GM12878 (cell line): ENCODE measurements at regions of chr13 and their contacts with region 1.

Region 1: GRCh38 chr13:64778002-64778401 is 2452.1 kb downstream of the PCDH9 start:
- DNase-seq: no peak
- ATAC-seq: no peak
- H3K4me3 ChIP-seq: no peak overlapping the region
- H3K27ac ChIP-seq: no peak overlapping the region
- H3K4me1 ChIP-seq: no peaks in the 10 kb centered on the region
- H3K27me3 ChIP-seq: no peaks in the 10 kb centered on the region
- CTCF ChIP-seq: no peak
- EP300 ChIP-seq: no peak
- POLR2A ChIP-seq: no peak
- RAD21 ChIP-seq: no peak

Region 2: DNA sequence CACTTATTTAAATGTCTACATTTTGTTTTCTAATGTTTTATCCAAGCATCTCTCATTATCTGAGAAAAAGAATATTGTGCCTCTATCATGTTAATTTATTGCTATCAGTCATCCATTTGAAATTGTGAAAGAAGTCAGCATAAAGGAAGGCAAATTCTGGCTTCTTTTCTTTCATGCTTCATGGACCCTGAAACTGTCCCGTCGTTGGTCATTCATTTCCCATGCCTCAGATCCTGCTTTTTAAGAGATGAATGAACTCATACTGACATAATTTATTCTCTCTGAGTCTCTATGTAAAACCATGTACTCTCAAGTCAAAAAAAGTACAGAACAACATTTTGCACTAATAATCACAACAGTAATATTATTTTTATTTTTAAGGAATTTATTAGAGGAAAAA is 59.9 kb before region 1 on chr13:
- CTCF ChIA-PET with region 1: no interaction called
- POLR2A ChIA-PET with region 1: no interaction called
- RAD21 ChIA-PET with region 1: no interaction called
- SMC1A ChIA-PET with region 1: no interaction called
- in situ Hi-C with region 1: loop called (anchors 10 kb)
- intact Hi-C with region 1: no loop called
- DNase-seq: no peak
- ATAC-seq: no peak
- H3K4me3 ChIP-seq: no peak overlapping the region
- H3K27ac ChIP-seq: no peak overlapping the region
- H3K4me1 ChIP-seq: no peaks in the 10 kb centered on the region
- H3K27me3 ChIP-seq: no peaks in the 10 kb centered on the region
- CTCF ChIP-seq: no peak
- EP300 ChIP-seq: no peak
- POLR2A ChIP-seq: no peak
- RAD21 ChIP-seq: no peak

Region 3: GRCh38 chr13:64791373-64791772 is 13.4 kb after region 1 on chr13:
- CTCF ChIA-PET with region 1: no interaction called
- POLR2A ChIA-PET with region 1: no interaction called
- RAD21 ChIA-PET with region 1: no interaction called
- SMC1A ChIA-PET with region 1: no interaction called
- in situ Hi-C with region 1: no loop called
- intact Hi-C with region 1: no loop called
- DNase-seq: no peak
- ATAC-seq: peak; percentile 58
- H3K4me3 ChIP-seq: no peak overlapping the region
- H3K27ac ChIP-seq: no peak overlapping the region
- H3K4me1 ChIP-seq: no peaks in the 10 kb centered on the region
- H3K27me3 ChIP-seq: no peaks in the 10 kb centered on the region
- CTCF ChIP-seq: no peak
- EP300 ChIP-seq: no peak
- POLR2A ChIP-seq: no peak
- RAD21 ChIP-seq: no peak

Region 4: GRCh38 chr13:64810750-64811149 is 32.7 kb after region 1 on chr13:
- CTCF ChIA-PET with region 1: no interaction called
- POLR2A ChIA-PET with region 1: no interaction called
- RAD21 ChIA-PET with region 1: no interaction called
- SMC1A ChIA-PET with region 1: no interaction called
- in situ Hi-C with region 1: no loop called
- intact Hi-C with region 1: no loop called
- DNase-seq: no peak
- ATAC-seq: no peak
- H3K4me3 ChIP-seq: no peak overlapping the region
- H3K27ac ChIP-seq: no peak overlapping the region
- H3K4me1 ChIP-seq: no peaks in the 10 kb centered on the region
- H3K27me3 ChIP-seq: no peaks in the 10 kb centered on the region
- CTCF ChIP-seq: no peak
- EP300 ChIP-seq: no peak
- POLR2A ChIP-seq: no peak
- RAD21 ChIP-seq: no peak